ENCODE measurements at regions of chr4 and their contacts with region 1.

Region 1: GRCh38 chr4:16196478-16197393 is 29.5 kb downstream of the TAPT1 start:
- DNase-seq: no peak
- H3K4me3 ChIP-seq: no peak overlapping the region
- H3K27ac ChIP-seq: no peak overlapping the region
- H3K4me1 ChIP-seq: peaks cover 0 to 3% (median 1%) of the 10 kb centered on the region in 4 experiments; a peak in 2 of 7 replicates
- H3K27me3 ChIP-seq: no peaks in the 10 kb centered on the region
- CTCF ChIP-seq: peak in 2 of 3 experiments; percentile 53 to 68; a peak in 3 of 4 replicates
- EP300 ChIP-seq: no peak
- POLR2A ChIP-seq: no peak
- RAD21 ChIP-seq: peak; percentile 53 to 59

Region 2: DNA sequence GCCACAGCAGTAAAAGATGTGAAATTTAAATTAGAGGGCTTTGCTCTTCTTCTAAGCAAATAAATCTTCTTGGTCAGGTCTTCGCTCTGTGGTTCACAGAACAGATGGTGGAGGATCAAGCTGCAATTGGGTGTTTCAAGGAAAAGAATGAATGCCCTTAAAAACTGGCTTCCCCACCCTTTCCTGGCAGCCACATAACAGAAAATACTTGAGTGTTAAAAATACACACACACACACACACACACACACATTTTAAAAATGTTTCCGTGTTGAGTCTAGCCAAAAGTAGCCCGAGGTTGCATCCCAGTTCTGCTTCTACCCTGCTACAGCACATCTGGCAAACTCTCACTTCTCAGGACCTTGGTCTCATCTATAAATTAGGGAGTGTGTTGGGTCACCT is 177.1 kb before region 1 on chr4:
- CTCF ChIA-PET with region 1: interaction called, 10 read pairs
- POLR2A ChIA-PET with region 1: interaction called, 3 read pairs
- DNase-seq: no peak
- H3K4me3 ChIP-seq: no peak overlapping the region
- H3K27ac ChIP-seq: no peak overlapping the region
- H3K4me1 ChIP-seq: no peaks in the 10 kb centered on the region
- H3K27me3 ChIP-seq: no peaks in the 10 kb centered on the region
- CTCF ChIP-seq: no peak
- EP300 ChIP-seq: no peak
- POLR2A ChIP-seq: no peak
- RAD21 ChIP-seq: no peak

Region 3: GRCh38 chr4:16026160-16026761 is 170.5 kb before region 1 on chr4:
- CTCF ChIA-PET with region 1: interaction called, 22 read pairs
- POLR2A ChIA-PET with region 1: no interaction called
- DNase-seq: no peak
- H3K4me3 ChIP-seq: no peak overlapping the region
- H3K27ac ChIP-seq: no peak overlapping the region
- H3K4me1 ChIP-seq: peaks cover 0 to 5% (median 3%) of the 10 kb centered on the region in 4 experiments; a peak in 4 of 7 replicates
- H3K27me3 ChIP-seq: no peaks in the 10 kb centered on the region
- CTCF ChIP-seq: peak in 2 of 3 experiments; percentile 70 to 71; a peak in 3 of 4 replicates
- EP300 ChIP-seq: no peak
- POLR2A ChIP-seq: no peak
- RAD21 ChIP-seq: peak; percentile 88 to 90

Region 4: GRCh38 chr4:16183604-16184003 is 13.1 kb before region 1 on chr4:
- CTCF ChIA-PET with region 1: interaction called, 24 read pairs
- POLR2A ChIA-PET with region 1: interaction called, 3 read pairs
- DNase-seq: no peak
- H3K4me3 ChIP-seq: no peak overlapping the region
- H3K27ac ChIP-seq: no peak overlapping the region
- H3K4me1 ChIP-seq: 0 out of 7 replicates have a peak, but pooled peaks cover 0 to 3% (median 0%) of the 10 kb centered on the region in 4 experiments
- H3K27me3 ChIP-seq: no peaks in the 10 kb centered on the region
- CTCF ChIP-seq: no peak
- EP300 ChIP-seq: no peak
- POLR2A ChIP-seq: no peak
- RAD21 ChIP-seq: no peak

Region 5: GRCh38 chr4:16217300-16218051 is 20.7 kb after region 1 on chr4:
- CTCF ChIA-PET with region 1: interaction called, 11 read pairs
- POLR2A ChIA-PET with region 1: interaction called, 4 read pairs
- DNase-seq: no peak
- H3K4me3 ChIP-seq: no peak overlapping the region
- H3K27ac ChIP-seq: no peak overlapping the region
- H3K4me1 ChIP-seq: peaks cover 0 to 3% (median 0%) of the 10 kb centered on the region in 4 experiments; a peak in 1 of 7 replicates
- H3K27me3 ChIP-seq: no peaks in the 10 kb centered on the region
- CTCF ChIP-seq: no peak
- EP300 ChIP-seq: no peak
- POLR2A ChIP-seq: no peak
- RAD21 ChIP-seq: no peak

Region 6: GRCh38 chr4:16264798-16265197 is 68.1 kb after region 1 on chr4:
- CTCF ChIA-PET with region 1: interaction called, 13 read pairs
- POLR2A ChIA-PET with region 1: no interaction called
- DNase-seq: no peak
- H3K4me3 ChIP-seq: no peak overlapping the region
- H3K27ac ChIP-seq: no peak overlapping the region
- H3K4me1 ChIP-seq: no peaks in the 10 kb centered on the region
- H3K27me3 ChIP-seq: peaks cover 0 to 1% (median 0%) of the 10 kb centered on the region in 4 experiments; a peak in 1 of 7 replicates
- CTCF ChIP-seq: peak in 2 of 3 experiments; percentile 25 to 41; a peak in 2 of 4 replicates
- EP300 ChIP-seq: no peak
- POLR2A ChIP-seq: no peak
- RAD21 ChIP-seq: peak; percentile 65 to 69